Heart right ventricle (tissue), 16 donors: ENCODE measurements at regions of chr9 and their contacts with region 1.

Region 1: DNA sequence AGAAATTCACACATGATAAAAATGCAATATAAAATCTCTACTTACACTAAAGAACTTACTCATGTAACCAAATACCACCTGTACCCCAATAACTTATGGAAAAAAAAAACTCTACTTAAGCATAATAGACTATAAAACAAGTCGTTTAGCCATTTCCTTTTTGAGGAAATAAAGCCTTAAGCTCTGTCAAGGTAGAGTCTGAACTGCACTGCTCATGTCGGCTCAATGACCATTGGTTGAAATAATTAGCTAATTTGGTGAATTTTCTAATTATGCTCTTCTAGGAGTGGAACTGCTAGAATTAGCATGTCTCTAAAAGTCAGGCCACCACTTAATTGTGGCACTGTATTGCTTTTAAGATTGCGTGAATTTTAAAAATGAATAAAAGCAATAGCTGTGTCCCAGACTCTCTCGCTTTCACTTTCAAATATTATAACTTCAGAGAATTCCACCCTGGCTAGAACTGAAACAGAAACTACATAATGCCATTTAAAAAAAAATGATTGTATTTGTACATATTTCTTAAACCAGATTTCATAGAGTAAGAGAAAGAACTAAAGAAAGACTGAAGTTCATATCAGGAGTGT is 113.0 kb upstream of the PCA3 start:
- DNase-seq: no peak
- ATAC-seq: peak in 5 of 8 donors; percentile 38 to 60 (median 49)
- H3K4me3 ChIP-seq: peak overlapping the region in 8 of 10 donors; percentile 8 to 47 (median 42)
- H3K27ac ChIP-seq: peak overlapping the region in 8 of 10 donors; percentile 16 to 85 (median 46)
- H3K4me1 ChIP-seq: peaks cover 0 to 66% (median 26%) of the 10 kb centered on the region in 9 donors
- H3K27me3 ChIP-seq: no peaks in the 10 kb centered on the region
- CTCF ChIP-seq: no peak

Region 2: GRCh38 chr9:76571288-76571687 is 79.9 kb before region 1 on chr9:
- intact Hi-C with region 1: loop called in 3 of 10 experiments (anchors 5 to 10 kb)
- DNase-seq: no peak
- ATAC-seq: peak in 5 of 8 donors; percentile 25 to 60 (median 28)
- H3K4me3 ChIP-seq: peak overlapping the region in 9 of 10 donors; percentile 33 to 66 (median 55)
- H3K27ac ChIP-seq: peak overlapping the region in 6 of 10 donors; percentile 33 to 84 (median 54)
- H3K4me1 ChIP-seq: peaks cover 0 to 31% (median 0%) of the 10 kb centered on the region in 9 donors
- H3K27me3 ChIP-seq: peaks cover 0 to 16% (median 0%) of the 10 kb centered on the region in 7 donors
- CTCF ChIP-seq: no peak